ENCODE measurements at regions of chr19 and their contacts with region 1.

Region 1: GRCh38 chr19:5904352-5905113 is at the start of gene VMAC:
- DNase-seq: peak; percentile 100
- H3K4me3 ChIP-seq: peak within 1 kb of the TSS; percentile 81 to 91 (median 90)
- H3K27ac ChIP-seq: peak within 1 kb of the TSS; percentile 84 to 94 (median 92)
- H3K4me1 ChIP-seq: peaks cover 0 to 34% (median 30%) of the 10 kb centered on the region in 4 donors
- H3K27me3 ChIP-seq: no peaks in the 10 kb centered on the region
- CTCF ChIP-seq: no peak
- EP300 ChIP-seq: no peak
- POLR2A ChIP-seq: no peak
- total RNA-seq, gene VMAC: 6.1 to 14.4 (median 8.1) TPM

Region 2: DNA sequence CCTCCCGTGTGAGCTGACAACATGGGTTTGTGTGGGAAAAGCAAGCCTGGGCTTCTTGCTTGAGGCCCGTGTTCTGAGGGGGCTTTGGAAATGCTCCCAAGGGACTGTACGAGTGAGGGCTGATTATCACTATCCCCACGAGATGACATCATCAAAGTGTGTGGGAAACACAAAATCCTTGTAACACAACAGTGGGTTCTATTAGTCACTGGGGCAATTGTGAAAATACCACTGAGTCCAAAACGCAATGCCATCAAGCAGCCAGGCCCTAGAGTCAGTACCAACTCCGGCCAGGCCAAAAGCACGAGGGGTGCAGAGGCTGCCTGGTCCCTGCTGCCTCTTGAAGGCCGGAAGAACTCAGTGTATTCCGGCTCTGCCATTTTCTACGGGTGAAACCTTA is 39.1 kb after region 1 on chr19:
- intact Hi-C with region 1: loop called (anchors 5 kb)
- DNase-seq: no peak
- H3K4me3 ChIP-seq: no peak overlapping the region
- H3K27ac ChIP-seq: peak overlapping the region; percentile 61 to 78 (median 76)
- H3K4me1 ChIP-seq: peaks cover 0 to 79% (median 67%) of the 10 kb centered on the region in 4 donors
- H3K27me3 ChIP-seq: no peaks in the 10 kb centered on the region
- CTCF ChIP-seq: no peak
- EP300 ChIP-seq: no peak
- POLR2A ChIP-seq: no peak

Region 3: DNA sequence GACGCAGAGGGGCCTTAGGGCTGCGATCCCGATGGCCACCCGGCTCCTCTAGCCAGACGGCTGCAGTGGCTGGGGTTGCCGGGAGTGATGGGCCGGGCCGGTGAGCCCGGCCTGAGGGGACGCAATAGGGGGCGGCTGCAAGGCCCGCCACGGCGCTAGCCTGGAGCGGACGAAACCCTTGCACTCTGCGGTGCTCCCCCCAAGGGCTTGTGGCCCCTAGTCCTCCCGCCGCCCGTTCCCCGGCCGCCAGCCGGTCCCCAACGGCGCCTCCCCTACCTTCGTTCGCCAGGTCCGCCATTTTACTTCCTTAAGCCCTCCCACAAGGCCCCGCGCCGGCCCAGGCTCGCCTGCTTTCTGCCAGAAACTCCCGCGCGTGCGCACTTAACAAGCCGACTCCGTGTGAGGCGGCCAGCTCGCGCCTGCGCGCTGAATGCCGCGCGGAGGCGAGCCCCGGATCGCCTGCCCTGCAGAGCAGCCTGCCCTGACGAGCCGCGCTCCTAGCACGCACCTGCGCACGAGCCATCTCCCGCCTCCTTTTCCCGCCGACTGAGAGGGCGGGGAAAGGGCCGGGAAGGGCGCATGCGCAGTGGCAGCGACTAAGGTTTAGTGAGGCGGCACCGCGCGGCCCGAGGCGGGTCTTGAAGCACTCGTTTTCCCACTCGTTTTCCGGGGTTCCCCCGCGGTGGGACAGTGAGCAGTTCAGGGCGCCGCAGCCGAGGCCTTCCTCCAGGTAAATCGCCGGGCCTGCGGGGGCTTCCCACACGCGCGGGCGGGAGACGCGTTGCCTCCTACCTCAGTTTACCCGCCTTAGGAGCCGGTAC is 73.5 kb after region 1 on chr19 and contains the start of gene RANBP3:
- intact Hi-C with region 1: loop called (anchors 1 kb)
- DNase-seq: peak; percentile 99
- H3K4me3 ChIP-seq: peak within 1 kb of the TSS; percentile 67 to 99 (median 85)
- H3K27ac ChIP-seq: peak within 1 kb of the TSS; percentile 84 to 93 (median 87)
- H3K4me1 ChIP-seq: peaks cover 0 to 61% (median 53%) of the 10 kb centered on the region in 4 donors
- H3K27me3 ChIP-seq: no peaks in the 10 kb centered on the region
- CTCF ChIP-seq: no peak
- EP300 ChIP-seq: peak in 1 of 4 donors; percentile 33
- POLR2A ChIP-seq: peak in 1 of 2 donors; percentile 26
- total RNA-seq, gene RANBP3: 63.1 to 86.4 (median 82.7) TPM